OCI-LY7 (cell line): ENCODE measurements at regions of chr13 and their contacts with region 1.

Region 1: DNA sequence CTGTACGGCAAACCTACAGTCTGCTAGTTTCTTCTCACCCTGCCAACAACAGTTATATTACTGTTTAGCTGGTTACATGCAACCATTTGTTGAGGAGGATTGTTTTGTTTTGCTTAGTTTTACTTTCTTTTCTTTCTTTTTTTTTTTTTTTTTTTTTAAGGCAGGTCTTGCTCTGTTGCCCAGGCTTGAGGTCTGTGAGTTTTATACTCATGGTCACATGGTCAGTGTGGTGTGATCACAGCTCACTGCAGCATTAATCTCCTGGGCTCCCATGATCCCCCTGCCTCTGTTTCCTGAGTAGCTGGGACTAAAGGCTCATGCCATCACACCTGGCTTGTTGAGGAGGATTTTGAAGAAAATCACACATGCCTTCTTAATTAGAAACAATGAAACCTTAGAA is 505.6 kb downstream of the GPC5 start:
- DNase-seq: no peak
- H3K4me3 ChIP-seq: no peak overlapping the region
- H3K27ac ChIP-seq: no peak overlapping the region
- H3K4me1 ChIP-seq: no peaks in the 10 kb centered on the region
- CTCF ChIP-seq: no peak

Region 2: DNA sequence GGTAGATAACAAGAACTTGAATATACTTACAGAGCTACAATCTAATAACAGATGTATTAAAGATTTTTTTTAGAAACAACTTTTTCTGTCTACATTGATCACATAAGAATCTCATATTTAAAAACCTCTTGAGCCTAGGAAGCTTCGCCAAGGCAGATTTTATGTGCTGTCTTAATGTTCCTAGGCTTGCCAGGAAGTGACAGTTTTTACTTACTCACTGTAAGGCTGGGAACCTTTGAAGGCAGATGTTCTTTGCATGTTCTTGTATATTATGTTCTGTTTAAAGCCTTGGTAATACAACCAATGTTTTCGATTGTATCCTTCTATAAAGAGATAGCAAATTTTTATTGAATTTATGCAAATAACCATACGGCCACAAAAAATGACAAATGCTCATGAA is 12.9 kb before region 1 on chr13:
- CTCF ChIA-PET with region 1: no interaction called
- POLR2A ChIA-PET with region 1: interaction called, 11 read pairs
- intact Hi-C with region 1: no loop called
- DNase-seq: no peak
- H3K4me3 ChIP-seq: no peak overlapping the region
- H3K27ac ChIP-seq: no peak overlapping the region
- H3K4me1 ChIP-seq: no peaks in the 10 kb centered on the region
- CTCF ChIP-seq: no peak

Region 3: DNA sequence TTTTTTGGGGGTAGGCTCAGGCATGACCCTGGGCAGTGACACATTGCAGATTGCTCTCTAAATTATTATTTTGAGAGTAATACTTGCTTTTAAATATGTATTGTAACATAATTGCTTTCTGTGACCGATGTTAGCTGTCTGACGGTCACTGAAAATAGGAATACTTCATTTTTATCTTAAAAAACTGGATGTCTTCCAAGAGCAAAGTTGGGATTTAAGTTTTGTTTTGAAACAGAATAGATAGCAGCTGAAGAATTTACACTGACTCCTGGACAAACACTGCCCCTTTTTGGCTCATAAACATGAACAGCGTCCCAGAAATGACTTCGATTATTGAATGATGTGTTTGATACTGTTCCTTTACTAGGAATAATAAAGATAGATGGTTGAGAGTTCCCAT is 30.3 kb after region 1 on chr13:
- CTCF ChIA-PET with region 1: no interaction called
- POLR2A ChIA-PET with region 1: interaction called, 19 read pairs
- intact Hi-C with region 1: no loop called
- DNase-seq: no peak
- H3K4me3 ChIP-seq: no peak overlapping the region
- H3K27ac ChIP-seq: no peak overlapping the region
- H3K4me1 ChIP-seq: no peaks in the 10 kb centered on the region
- CTCF ChIP-seq: no peak